ENCODE measurements at regions of chr6 and their contacts with region 1.

Region 1: DNA sequence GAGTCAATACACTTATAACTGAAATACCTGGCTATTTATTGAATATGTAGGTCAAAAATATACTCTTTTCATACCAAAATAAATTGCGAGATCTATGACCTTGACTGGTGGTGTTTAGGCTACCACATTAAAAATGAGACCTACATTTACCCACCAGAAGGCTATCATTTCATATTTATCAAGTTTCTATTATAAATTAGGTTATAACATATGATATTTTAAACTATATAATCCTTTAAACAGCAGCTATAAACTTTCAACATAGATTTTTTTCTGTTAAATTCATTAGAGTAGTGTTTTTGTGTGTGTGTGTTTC is 586.1 kb downstream of the HTR1B start:
- DNase-seq: no peak
- ATAC-seq: no peak

Region 2: DNA sequence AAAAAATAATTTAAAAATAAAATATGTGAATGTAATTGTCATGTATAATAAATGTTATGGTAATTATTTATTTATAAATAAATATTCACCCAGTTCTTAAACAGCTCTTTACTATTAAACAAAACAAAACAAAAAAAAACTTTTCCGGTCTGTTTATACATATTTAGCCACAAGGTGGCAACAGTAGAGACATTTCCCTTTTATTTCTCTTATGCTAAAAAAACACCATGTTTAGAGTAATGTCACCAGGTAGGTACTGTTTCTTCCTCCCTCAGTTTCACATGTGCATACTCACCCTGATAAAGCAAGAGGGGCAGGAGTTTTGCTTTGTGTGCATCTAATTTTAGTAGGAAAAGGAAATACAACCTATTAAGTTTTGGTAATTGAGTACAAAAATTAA is 194.4 kb before region 1 on chr6:
- intact Hi-C with region 1: loop called in 1 of 2 experiments (anchors 10 kb)
- DNase-seq: no peak
- ATAC-seq: no peak

Region 3: DNA sequence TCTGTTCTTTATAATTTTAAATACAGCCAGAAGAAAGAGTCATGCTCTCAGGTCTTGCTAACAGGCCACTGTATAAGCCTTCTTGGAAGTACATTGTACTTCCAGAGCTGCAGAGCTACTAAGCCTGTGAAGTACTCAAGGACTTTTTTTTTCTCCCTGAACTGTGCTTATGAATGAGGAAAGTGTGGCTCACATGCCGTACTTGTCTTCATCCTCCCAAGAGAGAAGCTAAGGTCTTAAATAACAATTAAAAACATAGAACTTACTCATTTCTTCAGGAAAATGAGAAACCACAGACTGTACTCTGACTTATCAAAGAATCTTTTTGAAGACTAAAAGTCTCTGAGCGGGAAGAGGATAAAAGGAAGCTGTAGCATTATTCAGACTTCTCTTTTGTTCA is 367.8 kb after region 1 on chr6:
- intact Hi-C with region 1: no loop called
- DNase-seq: no peak
- ATAC-seq: no peak